ENCODE measurements at regions of chr18 and their contacts with region 1.

Region 1: DNA sequence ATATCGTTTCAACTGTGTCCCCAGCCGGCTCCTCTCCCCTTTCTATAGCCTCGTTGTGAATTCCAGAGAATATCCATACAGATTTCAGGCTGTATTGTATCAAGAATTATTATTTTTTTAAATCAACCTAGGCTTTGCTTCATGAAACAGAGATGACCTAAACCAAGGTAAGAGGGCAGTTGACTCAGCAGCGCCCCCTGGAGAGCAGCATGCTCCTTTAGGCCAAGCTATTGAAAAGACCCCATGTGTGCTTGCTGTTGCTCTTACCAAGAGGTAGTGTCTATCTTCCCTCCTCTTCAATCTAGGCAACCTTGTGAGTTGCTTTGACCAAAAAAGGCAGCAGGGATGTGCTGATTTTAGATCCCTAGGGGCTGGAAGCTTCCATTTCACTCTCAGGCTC is 426.7 kb upstream of the SMIM21 start:
- DNase-seq: no peak
- ATAC-seq: no peak
- H3K4me3 ChIP-seq: no peak overlapping the region
- H3K27ac ChIP-seq: no peak overlapping the region
- H3K4me1 ChIP-seq: no peaks in the 10 kb centered on the region
- H3K27me3 ChIP-seq: no peaks in the 10 kb centered on the region
- CTCF ChIP-seq: peak in 3 of 12 donors; percentile 18 to 23 (median 20)
- POLR2A ChIP-seq: no peak

Region 2: GRCh38 chr18:75742516-75742915 is 111.7 kb before region 1 on chr18:
- intact Hi-C with region 1: no loop called
- DNase-seq: no peak
- ATAC-seq: no peak
- H3K4me3 ChIP-seq: no peak overlapping the region
- H3K27ac ChIP-seq: peak overlapping the region in 1 of 12 donors; percentile 64
- H3K4me1 ChIP-seq: no peaks in the 10 kb centered on the region
- H3K27me3 ChIP-seq: peaks cover 0 to 5% (median 0%) of the 10 kb centered on the region in 9 donors
- CTCF ChIP-seq: no peak
- POLR2A ChIP-seq: no peak

Region 3: DNA sequence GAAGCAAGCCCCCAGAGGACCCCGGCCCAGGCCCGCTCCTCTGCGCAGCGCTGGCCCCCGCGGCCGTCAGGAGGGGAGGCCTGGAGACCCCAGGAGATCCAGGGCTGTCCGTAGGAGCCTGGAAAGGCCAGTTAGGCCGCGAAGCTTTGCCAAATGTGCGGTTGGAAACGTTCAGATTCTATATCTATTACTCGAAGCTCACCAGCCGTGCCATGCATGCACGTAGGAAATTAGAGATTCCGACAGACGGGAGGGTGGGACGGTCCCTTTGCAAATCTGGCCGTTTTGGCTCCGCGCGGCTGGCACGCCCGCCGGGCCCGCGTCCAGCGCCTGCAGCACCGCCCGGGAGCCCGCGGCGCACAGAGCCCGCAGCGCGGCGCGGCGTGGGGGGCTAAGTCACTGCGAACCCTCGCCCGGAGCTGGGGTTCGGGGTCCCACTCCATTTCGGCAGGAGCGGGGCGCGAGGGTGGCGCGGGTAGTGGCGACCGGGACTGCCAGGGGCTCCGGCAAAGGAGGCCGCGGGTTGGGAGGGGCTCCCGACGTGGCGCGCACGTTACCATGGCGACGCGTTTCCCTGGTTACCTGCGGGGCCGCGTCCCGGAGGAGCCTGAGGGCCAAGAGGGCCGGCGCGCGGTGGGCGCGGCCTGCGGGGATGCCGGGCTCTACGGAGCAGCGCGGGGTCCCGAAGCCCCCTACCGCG is 61.9 kb after region 1 on chr18:
- intact Hi-C with region 1: loop called in 1 of 10 experiments (anchors 10 kb)
- DNase-seq: peak in 1 of 5 donors; percentile 30
- ATAC-seq: peak in 2 of 4 donors; percentile 45 to 51
- H3K4me3 ChIP-seq: peak overlapping the region; percentile 18 to 55 (median 44)
- H3K27ac ChIP-seq: no peak overlapping the region
- H3K4me1 ChIP-seq: peaks cover 0 to 9% (median 0%) of the 10 kb centered on the region in 12 donors
- H3K27me3 ChIP-seq: peaks cover 0 to 13% (median 0%) of the 10 kb centered on the region in 9 donors
- CTCF ChIP-seq: no peak
- POLR2A ChIP-seq: no peak

Measured in heart left ventricle (tissue), 16 donors.